Activated T-helper 1 cell treated with anti-CD3 and anti-CD28 coated beads, Interleukin-12 subunit alpha, Interleukin-12 subunit beta, Interleukin-2, Interleukin-4 antibody, amounts not matched to agents 30 ng/mL and 10 ng/mL and 1 ng/mL, durations not matched to agents 14 hours and 24 hours and 36 hours (primary cell): ENCODE measurements at regions of chr9 and their contacts with region 1.

Region 1: DNA sequence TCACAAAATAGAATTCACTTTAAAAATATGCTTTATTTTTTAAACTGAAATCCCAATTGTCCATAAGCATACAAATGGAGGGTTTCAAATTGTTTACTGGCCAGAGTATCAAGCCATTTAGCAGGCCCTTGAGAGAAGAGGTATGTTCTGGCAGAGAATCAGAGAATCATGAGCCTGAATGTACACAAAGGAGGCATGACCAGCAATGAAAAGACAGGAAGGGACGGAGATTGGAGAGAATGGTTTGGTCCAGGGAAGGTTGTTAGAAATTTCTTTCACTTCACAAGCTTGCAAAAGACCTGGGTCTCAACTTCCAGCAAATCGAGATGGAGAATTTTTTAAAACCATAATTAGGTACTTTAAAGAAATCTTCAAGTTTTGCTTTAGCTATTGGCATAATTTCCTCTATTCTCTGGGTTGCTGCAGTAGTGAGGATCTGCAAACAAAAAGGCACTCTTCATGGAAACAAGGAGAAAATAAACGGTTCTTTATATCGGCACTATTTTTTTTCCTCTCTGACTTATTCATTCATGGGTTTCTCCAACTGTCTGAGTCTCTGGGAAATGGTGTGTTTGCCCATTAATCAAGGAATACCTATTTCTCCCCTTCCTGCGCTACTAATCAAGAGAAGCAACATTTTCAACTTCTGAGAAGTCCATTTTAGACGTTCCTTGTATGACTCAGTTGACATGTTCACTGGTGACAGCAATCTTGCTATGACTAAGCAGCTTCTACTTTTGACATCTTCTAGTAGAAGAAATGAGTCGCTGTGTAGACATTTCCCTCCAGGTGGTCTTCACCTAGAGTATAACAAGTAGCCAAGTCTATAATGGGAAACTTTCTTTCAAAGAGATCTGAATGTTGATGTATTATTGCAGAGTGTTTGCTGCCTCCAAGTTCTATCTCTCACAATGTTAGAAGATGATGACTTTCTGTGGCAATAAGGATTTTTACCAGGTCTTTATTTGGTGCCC is 23.1 kb upstream of the ERCC6L2 start:
- DNase-seq: peak; percentile 27
- H3K4me3 Mint-ChIP-seq: peak overlapping the region; percentile 27
- H3K27ac Mint-ChIP-seq: peak overlapping the region; percentile 10
- H3K4me1 Mint-ChIP-seq: peaks cover 39% of the 10 kb centered on the region
- H3K27me3 Mint-ChIP-seq: no peaks in the 10 kb centered on the region

Region 2: DNA sequence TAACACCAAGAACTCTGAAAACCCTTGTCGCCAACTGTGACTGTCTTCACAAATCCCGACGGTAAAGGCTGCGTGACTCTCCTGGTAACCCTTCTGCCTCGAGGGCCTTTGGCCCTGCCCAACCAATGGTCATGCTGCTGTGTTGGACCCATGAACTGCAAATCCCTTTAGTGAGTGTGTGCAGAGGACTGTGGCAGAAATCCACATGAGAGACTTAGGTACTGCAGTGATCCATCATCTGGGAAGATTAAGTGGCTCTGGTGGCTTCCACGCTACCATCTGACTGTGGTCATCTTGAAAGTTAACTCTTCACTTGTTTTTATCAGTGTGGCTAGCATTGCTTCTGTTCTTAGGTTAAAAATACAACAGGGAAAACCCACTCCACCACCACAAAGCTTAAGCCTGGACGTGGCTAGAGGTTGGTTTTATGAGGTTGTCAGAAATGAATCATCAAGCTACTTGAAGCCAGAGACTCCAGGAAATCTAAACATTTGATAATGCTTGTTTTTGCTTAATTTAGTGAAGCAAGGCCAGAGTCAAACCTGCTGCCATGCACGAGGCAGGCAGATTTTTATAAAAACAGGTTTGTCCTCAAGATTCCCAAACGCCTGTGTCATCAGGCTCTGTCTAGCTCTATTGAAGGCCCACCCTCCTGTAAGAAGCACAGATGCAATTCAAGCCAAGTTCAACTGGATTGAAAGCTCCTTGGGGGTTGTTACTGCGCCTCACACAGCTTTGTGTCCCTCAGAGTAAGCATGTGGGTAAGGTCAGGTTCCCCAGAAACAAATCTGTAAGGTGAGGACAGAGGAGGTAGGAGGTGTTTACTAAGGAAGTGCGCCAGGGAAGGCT is 29.5 kb before region 1 on chr9:
- intact Hi-C with region 1: loop called (anchors 1 kb)
- DNase-seq: peak; percentile 54
- H3K4me3 Mint-ChIP-seq: no peak overlapping the region
- H3K27ac Mint-ChIP-seq: peak overlapping the region; percentile 77
- H3K4me1 Mint-ChIP-seq: peaks cover 29% of the 10 kb centered on the region
- H3K27me3 Mint-ChIP-seq: peaks cover 31% of the 10 kb centered on the region

Region 3: DNA sequence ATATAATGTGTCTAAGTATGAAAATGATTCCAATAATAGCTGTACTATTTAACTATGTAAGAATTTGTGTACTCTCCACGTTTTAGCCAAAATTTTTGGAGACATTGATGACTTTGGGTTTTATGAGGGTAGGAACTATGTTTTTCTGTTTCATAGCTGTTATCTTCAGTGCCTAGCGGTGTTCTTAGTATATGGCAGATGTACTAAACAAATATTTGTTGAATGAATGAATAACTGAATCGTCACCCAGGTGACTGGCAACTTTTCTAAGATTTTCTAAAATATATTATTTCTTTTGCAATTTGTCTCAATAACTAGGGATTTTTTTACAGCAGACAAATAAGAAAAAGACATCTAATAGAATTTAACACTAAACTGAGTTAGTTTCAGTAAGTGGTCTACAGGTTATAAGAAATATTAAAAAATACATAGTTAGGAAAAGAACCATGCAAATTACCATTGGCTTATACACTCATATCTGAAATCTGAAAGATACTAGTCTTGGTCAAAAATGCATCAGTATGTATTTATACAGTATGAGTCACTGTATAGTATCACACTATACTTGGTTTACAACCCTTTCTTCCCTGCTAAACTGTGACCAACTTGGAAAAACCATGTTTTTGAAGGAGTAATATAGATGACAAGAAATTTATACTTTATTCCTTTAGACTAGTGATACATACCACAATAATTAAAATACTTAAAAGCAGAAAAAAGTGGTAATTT is 12.7 kb after region 1 on chr9:
- intact Hi-C with region 1: loop called (anchors 1 kb)
- DNase-seq: no peak
- H3K4me3 Mint-ChIP-seq: no peak overlapping the region
- H3K27ac Mint-ChIP-seq: no peak overlapping the region
- H3K4me1 Mint-ChIP-seq: peaks cover 7% of the 10 kb centered on the region
- H3K27me3 Mint-ChIP-seq: no peaks in the 10 kb centered on the region

Region 4: GRCh38 chr9:96150324-96151227 is 298.2 kb after region 1 on chr9:
- intact Hi-C with region 1: loop called (anchors 2 kb)
- DNase-seq: peak; percentile 42
- H3K4me3 Mint-ChIP-seq: peak overlapping the region; percentile 47
- H3K27ac Mint-ChIP-seq: peak overlapping the region; percentile 65
- H3K4me1 Mint-ChIP-seq: peaks cover 38% of the 10 kb centered on the region
- H3K27me3 Mint-ChIP-seq: peaks cover 15% of the 10 kb centered on the region

Region 5: DNA sequence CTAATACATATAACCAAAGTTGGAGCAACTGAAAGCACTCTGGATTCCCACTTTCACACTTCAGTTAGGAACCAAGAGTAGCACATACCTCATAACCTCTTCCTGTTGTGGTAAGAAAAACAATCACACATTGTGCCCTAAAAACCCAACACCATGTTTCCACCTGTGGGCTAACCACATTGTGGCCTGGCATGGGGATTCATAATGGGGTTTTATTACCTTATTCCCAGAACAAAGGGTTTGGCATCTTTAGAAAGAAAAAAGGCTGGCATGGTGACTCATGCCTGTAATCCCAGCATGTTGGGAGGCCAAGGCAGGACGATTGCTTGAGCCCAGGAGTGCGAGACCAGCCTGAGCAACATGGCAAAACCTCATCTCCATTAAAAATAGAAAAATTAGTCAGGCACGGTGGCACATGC is 389.1 kb after region 1 on chr9:
- intact Hi-C with region 1: loop called (anchors 1 kb)
- DNase-seq: peak; percentile 53
- H3K4me3 Mint-ChIP-seq: peak overlapping the region; percentile 7
- H3K27ac Mint-ChIP-seq: peak overlapping the region; percentile 88
- H3K4me1 Mint-ChIP-seq: peaks cover 16% of the 10 kb centered on the region
- H3K27me3 Mint-ChIP-seq: peaks cover 69% of the 10 kb centered on the region